ENCODE measurements at regions of chr1 and their contacts with region 1.

Region 1: GRCh38 chr1:51044834-51045233 is 57.2 kb upstream of the C1orf185 start:
- DNase-seq: no peak
- ATAC-seq: no peak
- H3K4me3 ChIP-seq: no peak overlapping the region
- H3K27ac ChIP-seq: no peak overlapping the region
- H3K4me1 ChIP-seq: no peaks in the 10 kb centered on the region
- H3K27me3 ChIP-seq: no peaks in the 10 kb centered on the region; the same call in 1 of the 2 replicates
- CTCF ChIP-seq: peak; percentile 32
- POLR2A ChIP-seq: no peak
- RAD21 ChIP-seq: peak; percentile 22

Region 2: DNA sequence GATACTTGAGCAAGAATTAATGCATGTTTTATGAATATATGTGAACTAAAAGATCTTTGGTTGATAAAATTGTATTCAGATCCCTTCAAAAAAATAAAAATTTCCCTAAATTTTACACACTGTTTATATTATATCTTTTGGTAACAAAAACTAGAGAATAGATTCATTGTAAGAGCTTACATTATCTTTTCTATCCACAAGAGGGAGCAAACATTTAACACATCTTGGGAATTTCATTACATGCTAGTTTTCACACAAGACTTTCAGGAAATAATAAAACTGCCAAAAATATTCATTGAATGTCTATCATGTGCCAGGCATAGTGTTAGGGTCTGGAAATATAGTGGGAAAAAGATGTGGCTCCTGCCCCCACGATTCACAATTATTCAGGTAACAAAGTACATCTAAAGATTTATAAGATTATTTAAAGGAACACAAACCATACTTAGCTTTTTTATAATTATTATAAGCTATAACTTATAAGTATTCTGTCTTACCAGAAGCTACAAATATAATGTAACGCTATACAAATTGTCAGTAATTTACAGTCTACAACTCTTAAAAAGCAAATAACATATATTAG is 115.4 kb before region 1 on chr1:
- CTCF ChIA-PET with region 1: no interaction called
- POLR2A ChIA-PET with region 1: no interaction called
- dilution Hi-C with region 1: no loop called
- in situ Hi-C with region 1: no loop called
- intact Hi-C with region 1: loop called (anchors 1 kb)
- DNase-seq: peak; percentile 59
- ATAC-seq: peak; percentile 54; the same call in 1 of the 2 replicates
- H3K4me3 ChIP-seq: no peak overlapping the region
- H3K27ac ChIP-seq: no peak overlapping the region
- H3K4me1 ChIP-seq: peaks cover 2% of the 10 kb centered on the region; the same call in 1 of the 2 replicates
- H3K27me3 ChIP-seq: no peaks in the 10 kb centered on the region
- CTCF ChIP-seq: peak; percentile 61
- POLR2A ChIP-seq: no peak
- RAD21 ChIP-seq: peak; percentile 52